Ascending aorta (tissue), 2 donors: ENCODE measurements at regions of chr11 and their contacts with region 1.

Region 1: DNA sequence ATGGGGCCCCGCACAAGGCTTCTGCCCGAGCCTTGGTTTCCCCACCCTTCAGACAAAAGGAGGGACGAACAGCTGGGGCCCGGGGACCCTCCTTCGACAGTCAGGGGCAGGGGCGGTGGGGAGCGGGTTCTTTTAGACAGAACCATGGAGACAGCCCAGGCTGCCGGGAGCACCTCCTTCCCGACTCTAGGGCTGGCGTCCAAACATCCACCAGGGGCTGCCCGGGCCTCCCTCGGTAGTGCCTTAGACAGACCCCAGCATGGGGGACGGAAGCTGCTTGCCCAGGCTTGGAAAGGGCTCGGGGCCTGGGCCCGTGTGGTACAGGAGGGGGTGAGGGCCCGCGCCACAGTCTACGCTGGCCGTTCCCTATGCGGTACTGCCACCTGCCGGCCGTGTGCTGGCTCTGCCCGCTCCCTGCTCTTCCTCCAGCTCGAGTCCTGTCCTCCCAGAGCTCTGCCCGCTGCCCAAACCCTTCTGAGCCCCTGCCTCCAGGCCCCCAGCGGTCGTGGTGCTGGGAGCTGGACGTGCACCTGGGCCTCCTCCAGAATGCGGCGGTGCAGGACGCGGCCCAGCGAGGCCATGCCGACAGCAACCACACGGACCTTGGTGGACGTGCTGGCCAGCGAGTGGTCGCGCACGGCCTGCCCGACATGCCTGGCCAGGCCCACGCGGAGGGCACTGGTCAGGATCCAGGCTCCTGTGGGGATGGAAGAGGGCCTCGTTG is 20.1 kb downstream of the TSSC4 start:
- DNase-seq: peak in 1 of 2 donors; percentile 82
- H3K4me3 ChIP-seq: no peak overlapping the region
- H3K27ac ChIP-seq: no peak overlapping the region
- H3K4me1 ChIP-seq: peaks cover 0 to 3% of the 10 kb centered on the region in 2 donors
- H3K27me3 ChIP-seq: no peaks in the 10 kb centered on the region
- CTCF ChIP-seq: peak; percentile 90 to 96 (median 96)

Region 2: DNA sequence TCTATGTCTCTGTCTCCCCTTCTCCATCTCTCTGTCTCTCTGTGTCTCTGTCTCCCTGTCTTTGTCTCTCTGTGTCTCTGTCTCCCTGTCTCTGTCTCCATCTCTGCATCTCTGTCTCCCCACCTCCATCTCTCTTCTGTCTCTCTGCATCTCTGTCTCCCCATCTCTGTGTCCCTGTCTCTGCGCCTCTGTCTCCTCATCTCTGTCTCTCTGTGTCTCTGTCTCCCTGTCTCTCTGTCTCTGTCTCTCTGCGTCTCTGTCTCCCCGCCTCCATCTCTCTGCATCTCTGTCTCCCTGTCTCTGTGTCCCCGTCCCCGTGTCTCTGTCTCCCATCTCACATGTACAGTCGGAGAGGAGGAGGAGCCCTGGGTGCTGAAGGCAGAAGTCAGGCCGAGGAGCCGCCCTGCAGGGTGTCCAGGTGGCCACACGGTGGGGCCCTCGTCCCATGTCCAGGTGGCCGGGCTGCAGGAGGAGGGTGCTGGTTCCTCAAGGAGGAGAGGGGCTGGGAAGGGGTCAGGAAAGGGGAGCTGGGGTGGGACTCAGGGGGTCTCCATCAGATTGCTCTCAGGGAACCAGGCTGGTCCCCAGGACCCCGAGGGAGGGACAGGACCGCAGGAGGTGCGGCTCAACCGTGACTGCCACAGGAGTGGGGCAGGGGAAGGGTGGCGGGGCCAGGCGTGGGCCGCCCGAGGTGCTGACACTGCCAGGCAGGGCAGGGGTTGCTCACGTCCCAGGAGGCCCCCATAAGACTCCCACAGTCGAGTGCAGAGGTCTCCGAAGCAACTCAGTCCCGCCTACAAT is 223.5 kb before region 1 on chr11:
- intact Hi-C with region 1: loop called (anchors 1 kb)
- DNase-seq: peak; percentile 17 to 84
- H3K4me3 ChIP-seq: no peak overlapping the region
- H3K27ac ChIP-seq: no peak overlapping the region
- H3K4me1 ChIP-seq: no peaks in the 10 kb centered on the region
- H3K27me3 ChIP-seq: no peaks in the 10 kb centered on the region
- CTCF ChIP-seq: peak; percentile 69 to 86 (median 85)

Region 3: DNA sequence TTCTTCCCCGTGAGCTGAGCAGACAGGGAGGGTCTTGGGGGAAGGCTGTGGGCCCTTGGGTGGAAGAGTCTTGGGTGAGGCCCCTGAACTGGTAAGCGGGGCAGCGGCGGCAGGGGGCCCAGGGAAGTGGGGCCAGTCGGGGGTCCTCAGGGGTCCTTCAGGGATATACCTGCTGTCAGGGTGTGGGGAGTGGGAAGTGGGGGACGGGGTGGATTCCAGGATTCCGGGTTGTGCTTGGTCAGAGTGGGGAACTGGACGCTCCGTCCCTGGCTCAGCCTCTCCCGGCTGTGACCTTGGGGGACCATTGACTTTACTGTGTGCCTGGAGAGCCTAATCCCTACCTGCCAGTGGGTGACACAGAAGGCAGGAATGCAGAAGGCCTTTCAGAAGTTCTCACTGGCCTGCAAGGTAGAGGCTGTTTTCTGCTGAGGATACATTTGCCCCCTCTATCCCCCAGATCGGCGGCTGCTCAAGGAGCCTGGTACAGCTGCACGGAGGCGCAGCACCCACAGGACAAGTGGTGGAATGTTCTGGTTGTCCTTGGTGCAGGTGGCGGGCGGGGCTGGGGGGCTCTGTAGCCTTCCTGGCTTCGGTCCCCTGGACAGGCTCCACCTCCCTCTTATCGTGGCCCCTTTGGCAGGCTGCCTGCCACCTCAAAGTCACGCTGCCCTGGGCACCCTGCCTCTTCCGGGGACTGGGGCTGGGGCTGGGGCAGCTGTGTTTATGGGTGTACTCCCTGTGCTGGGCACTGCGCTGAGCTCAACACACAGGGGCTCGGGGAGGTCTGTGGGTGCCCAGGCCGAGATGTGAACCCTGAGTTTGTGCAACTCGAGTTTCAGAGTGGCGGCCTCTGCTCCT is 42.5 kb after region 1 on chr11:
- intact Hi-C with region 1: no loop called
- DNase-seq: no peak
- H3K4me3 ChIP-seq: no peak overlapping the region
- H3K27ac ChIP-seq: no peak overlapping the region
- H3K4me1 ChIP-seq: no peaks in the 10 kb centered on the region
- H3K27me3 ChIP-seq: no peaks in the 10 kb centered on the region
- CTCF ChIP-seq: no peak

Region 4: DNA sequence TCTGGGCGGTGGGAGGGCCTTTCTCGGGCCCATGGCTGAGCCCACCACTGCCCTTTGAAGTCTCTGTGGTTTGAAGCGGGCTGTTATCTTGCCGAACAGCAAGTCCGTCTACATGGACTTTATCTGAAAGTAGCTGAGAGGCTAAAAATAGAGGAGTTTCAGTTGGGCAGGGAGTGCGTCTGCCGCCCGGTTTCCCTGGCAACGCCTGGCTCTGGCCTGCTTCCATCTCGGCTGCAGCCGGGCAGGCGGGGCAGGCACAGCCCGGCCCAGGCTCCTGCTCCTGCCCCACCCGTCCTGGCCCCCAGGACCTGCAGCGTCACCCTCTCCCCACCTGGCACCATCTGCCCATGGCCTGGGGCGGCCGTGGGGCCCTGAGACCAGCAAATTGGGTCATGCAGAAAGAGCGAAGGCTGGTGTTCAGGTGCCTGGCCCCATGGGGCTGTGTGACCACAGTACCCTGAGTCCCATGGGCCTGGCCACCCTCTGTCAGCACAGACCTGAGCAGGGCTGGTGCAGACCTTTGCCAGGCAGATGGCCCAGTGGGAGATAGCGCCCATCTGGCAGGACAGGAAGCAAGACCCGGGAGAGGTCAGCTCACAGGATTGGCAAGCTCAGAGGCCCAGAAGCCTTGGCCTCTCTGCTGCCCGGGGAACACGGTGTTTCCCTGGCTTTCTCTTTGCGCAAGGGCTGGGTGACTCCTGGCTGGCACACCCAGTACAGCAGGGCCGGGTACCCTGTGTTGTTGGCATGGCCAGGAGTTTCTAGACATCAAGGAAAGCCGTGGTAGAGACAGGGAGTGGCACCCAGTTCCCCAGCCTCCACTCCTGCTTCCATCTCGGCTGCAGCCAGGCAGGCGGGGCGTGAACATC is 358.2 kb after region 1 on chr11:
- intact Hi-C with region 1: no loop called
- DNase-seq: peak; percentile 47 to 89
- H3K4me3 ChIP-seq: peak overlapping the region; percentile 18 to 53
- H3K27ac ChIP-seq: peak overlapping the region; percentile 68 to 81
- H3K4me1 ChIP-seq: peaks cover 11 to 36% of the 10 kb centered on the region in 2 donors
- H3K27me3 ChIP-seq: no peaks in the 10 kb centered on the region
- CTCF ChIP-seq: peak in 2 of 3 experiments; percentile 13 to 52